ENCODE measurements at regions of chr11 and their contacts with region 1.

Region 1: GRCh38 chr11:115379528-115379927 is 124.7 kb downstream of the CADM1 start:
- DNase-seq: no peak
- ATAC-seq: peak; percentile 33
- H3K4me3 Mint-ChIP-seq: no peak overlapping the region
- H3K27ac Mint-ChIP-seq: no peak overlapping the region
- H3K4me1 Mint-ChIP-seq: no peaks in the 10 kb centered on the region
- H3K27me3 Mint-ChIP-seq: peaks cover 1% of the 10 kb centered on the region

Region 2: DNA sequence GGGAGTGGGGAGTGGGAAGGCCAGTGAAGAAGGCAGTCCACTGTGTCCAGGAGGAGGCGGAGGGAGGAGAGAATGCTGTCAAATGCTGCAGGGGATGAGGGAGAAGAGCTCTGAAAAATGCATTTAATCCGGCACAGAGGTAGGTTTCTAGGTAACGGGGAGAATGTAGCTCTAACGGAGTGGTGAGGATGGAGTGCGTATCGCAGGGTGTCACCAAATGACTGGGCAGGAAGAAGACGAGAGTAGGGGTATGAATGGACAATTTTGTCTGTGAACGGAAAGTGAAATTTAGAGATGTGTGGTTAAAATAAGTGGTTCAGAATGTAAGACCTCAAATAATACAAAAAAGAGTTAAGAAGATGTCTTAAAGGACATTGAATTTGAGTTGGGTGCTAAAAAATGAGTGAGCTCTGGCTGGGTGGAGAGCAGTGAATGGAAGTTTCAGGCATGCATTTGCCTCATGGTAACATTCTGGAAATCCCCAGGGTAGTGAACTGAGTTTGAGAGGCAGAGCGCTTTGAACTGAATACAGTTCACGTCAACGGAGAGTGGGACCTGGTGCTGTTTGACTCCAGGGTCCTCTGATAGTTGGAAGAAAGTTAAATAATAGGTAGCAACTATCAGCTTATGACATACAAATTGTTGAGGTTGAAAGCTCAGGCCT is 206.0 kb after region 1 on chr11:
- CTCF ChIA-PET with region 1: no interaction called
- POLR2A ChIA-PET with region 1: no interaction called
- intact Hi-C with region 1: loop called in 1 of 2 experiments (anchors 1 kb)
- DNase-seq: peak; percentile 15
- ATAC-seq: peak; percentile 86
- H3K4me3 Mint-ChIP-seq: no peak overlapping the region
- H3K27ac Mint-ChIP-seq: no peak overlapping the region
- H3K4me1 Mint-ChIP-seq: no peaks in the 10 kb centered on the region
- H3K27me3 Mint-ChIP-seq: peaks cover 4% of the 10 kb centered on the region